ENCODE measurements at regions of chr1 and their contacts with region 1.

Region 1: GRCh38 chr1:41432481-41433280 is 51.8 kb downstream of the EDN2 start:
- DNase-seq: peak; percentile 93 to 97
- ATAC-seq: peak; percentile 94
- H3K4me3 ChIP-seq: no peak overlapping the region
- H3K27ac ChIP-seq: peak overlapping the region in 1 of 2 donors; percentile 14
- H3K4me1 ChIP-seq: no peaks in the 10 kb centered on the region
- H3K27me3 ChIP-seq: no peaks in the 10 kb centered on the region

Region 2: DNA sequence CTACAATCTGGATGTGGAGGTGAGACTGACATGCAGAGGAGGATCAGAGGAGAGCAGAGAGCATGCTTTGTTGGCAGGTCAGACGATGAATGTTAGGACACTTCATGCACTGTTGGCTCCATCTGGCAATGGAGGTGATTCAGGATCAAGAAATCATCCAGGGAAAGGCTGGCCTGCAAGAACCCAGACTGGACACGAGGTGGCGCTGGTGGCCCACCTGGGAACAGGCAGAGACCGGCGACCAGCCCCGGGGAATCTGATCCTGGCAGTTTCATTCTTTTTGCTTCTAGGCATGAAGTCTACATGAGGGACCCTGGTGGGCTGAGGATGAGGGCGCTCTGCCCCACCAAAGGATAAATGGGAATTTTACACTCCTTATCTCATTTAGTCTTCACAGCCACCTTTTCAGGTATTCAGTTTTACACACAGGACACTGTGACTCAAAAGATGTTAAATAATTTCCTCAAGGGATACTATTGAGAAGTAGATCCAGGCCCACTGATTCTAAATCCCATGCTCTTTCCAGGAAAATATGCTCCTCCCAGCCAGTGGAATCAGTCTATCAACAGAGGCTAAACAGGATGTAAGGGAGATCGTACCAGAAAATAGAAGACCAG is 164.4 kb before region 1 on chr1:
- intact Hi-C with region 1: loop called (anchors 2 to 5 kb)
- DNase-seq: peak; percentile 82 to 89
- ATAC-seq: peak; percentile 90
- H3K4me3 ChIP-seq: no peak overlapping the region
- H3K27ac ChIP-seq: no peak overlapping the region
- H3K4me1 ChIP-seq: no peaks in the 10 kb centered on the region
- H3K27me3 ChIP-seq: no peaks in the 10 kb centered on the region

Region 3: DNA sequence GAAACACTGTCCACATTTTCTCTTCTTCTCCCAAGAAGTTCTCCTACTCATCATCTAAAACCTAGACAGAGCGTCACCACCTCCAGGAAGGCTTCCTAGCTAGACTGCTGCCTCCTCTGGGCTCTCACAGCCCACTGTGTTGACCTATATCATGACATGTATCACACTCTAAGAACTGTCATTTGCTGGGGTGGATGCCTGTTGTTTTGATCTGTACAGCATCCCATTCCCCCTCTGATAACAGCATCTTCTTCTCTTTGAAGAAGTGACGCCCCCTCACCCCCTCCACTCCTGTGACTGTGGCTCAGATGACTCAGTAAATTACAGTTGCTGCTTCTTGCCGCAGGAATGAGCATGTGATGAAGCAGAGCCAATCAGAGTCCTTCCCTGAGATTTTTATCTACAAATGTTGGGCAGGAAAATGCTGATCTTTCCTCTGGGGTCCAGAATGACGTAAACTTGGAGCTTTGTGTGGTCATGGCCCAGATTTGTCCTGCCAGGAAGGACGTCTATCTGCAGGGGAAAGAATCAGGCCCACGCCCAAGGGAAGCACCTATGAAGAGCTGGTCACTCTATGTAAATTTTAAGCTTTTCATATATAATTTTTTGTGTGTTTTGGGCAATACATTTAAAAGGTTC is 99.4 kb before region 1 on chr1:
- intact Hi-C with region 1: no loop called
- DNase-seq: no peak
- ATAC-seq: no peak
- H3K4me3 ChIP-seq: no peak overlapping the region
- H3K27ac ChIP-seq: no peak overlapping the region
- H3K4me1 ChIP-seq: no peaks in the 10 kb centered on the region
- H3K27me3 ChIP-seq: no peaks in the 10 kb centered on the region

Region 4: DNA sequence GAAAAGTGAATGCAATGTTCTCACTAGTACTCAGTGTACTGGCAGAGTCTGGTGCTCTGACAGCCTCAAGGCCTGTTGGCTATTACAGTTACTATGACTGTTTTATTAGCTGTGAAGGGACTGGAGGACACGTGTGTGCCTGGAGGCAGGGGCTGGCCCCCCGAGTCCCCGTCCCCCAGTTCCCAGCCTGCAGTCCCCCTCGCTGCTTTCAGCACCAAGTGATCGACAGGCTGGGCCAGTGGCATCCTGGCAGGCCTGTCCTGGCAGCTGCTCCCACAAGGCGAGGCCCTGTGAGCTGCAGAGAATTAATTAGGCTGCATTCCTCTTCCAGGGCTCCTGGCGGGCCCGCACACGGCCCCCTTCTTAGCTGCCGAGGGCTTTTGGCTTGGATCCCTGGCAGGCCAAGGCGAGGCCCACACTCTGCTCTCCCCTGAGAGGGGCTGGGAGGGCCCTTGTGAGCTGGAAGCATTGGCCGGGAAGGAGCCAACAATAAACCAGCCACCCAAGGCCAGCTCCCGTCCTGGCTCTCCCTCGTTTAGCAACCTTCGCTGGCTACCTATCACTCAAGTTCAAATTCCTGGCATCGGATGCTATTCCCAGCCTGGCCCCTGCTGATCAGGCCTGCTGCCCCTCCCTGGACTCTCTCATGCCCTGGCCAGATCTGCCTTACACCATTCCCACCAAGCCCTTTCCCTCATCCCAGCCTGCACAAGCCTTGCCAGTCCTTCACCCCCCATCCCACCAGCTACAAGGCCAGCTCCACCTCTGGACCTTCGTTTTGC is 42.0 kb after region 1 on chr1:
- intact Hi-C with region 1: loop called in 1 of 2 experiments (anchors 5 kb)
- DNase-seq: peak; percentile 67 to 84
- ATAC-seq: peak; percentile 74
- H3K4me3 ChIP-seq: no peak overlapping the region
- H3K27ac ChIP-seq: peak overlapping the region in 1 of 2 donors; percentile 68
- H3K4me1 ChIP-seq: no peaks in the 10 kb centered on the region
- H3K27me3 ChIP-seq: no peaks in the 10 kb centered on the region

Region 5: DNA sequence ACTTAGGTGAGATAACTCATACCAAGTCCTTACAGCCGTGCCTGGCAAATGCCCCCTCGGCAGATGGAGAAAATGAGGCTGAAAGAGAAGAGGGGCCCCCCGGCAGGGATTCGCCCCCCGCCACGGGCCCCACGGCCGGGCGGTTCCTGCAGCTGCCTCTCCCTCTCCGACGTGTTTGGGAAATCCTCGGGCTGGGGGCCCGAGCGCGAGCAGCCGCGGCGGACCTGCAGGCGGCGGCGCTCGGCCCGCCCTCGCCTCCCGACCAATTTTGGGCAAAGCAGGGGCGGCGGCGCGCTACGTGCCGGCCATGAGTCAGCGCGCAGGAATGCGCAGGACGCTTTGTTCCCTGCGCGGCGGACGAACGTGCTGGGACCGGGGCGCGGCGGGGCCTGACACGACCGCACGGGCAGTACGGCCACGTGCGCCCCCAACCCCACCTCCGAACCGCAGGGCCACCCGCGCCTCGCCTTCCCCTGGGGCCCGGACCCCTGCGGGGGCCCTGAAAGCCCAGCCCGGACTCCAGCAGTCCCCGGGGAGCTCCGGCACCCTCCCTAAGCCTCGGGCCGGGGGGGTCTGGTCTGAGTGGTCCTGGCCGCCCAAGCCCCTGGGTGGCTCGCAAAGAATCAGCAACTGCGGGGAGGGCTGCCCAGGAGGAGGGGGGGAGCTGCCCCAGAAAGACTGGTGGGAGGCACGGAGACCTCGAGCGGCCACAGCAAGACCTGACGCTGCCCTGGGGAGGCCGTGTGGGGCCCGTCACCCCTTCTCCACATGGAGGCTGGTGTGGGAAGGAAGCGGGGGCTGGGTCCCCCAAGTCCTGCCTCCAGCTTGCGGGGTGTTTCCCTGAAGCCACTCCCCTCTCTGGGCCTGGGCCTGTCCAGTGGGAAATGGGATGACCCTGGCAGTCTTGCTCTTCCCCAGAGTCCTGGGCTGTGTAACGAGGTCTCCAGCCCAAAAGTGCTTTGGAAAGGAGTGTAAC is 63.7 kb after region 1 on chr1:
- intact Hi-C with region 1: loop called in 1 of 2 experiments (anchors 5 kb)
- DNase-seq: peak; percentile 92 to 97
- ATAC-seq: peak; percentile 83
- H3K4me3 ChIP-seq: no peak overlapping the region
- H3K27ac ChIP-seq: peak overlapping the region; percentile 71
- H3K4me1 ChIP-seq: peaks cover 0 to 5% of the 10 kb centered on the region in 2 donors
- H3K27me3 ChIP-seq: no peaks in the 10 kb centered on the region

Region 6: DNA sequence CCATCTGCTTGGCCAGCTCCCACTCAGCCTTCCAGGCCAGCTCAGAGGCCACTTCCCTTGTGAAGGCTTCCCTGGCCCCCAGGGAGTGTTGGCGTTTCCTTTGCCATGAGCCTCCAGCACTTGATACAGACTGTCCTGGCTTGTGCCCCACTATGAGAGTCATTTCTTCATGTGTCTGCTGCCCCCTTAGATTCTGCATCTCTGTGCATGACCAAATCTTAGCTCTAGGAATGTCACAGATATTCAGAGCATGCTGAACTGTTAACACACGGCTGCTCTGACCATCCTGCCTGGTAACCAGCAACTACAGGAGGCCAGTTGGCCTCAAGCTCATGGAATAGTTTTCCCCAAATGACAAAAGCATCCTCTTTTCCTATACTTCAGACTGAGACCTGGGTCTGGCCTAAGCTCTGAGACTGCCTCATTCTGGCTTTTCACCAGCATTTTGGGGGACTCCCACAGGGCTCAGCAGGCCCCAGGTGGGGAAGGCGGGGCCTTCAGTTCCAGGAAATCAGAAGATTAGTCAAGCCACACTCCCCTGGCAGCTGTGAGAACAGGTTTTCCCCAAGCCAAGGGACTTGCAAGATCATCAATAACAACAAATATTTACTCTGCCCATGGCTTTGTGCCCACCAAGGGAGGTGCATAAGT is 234.4 kb after region 1 on chr1:
- intact Hi-C with region 1: no loop called
- DNase-seq: no peak
- ATAC-seq: no peak
- H3K4me3 ChIP-seq: no peak overlapping the region
- H3K27ac ChIP-seq: no peak overlapping the region
- H3K4me1 ChIP-seq: peaks cover 0 to 3% of the 10 kb centered on the region in 2 donors
- H3K27me3 ChIP-seq: no peaks in the 10 kb centered on the region